Natural killer cell (primary cell): ENCODE measurements at regions of chr17 and their contacts with region 1.

Region 1: GRCh38 chr17:29617125-29617480 is 5.6 kb downstream of the CORO6 start:
- DNase-seq: peak; percentile 88 to 95
- ATAC-seq: peak; percentile 70 to 77 (median 71)
- H3K4me3 ChIP-seq: peak overlapping the region; percentile 60
- H3K4me3 Mint-ChIP-seq: peak overlapping the region; percentile 90
- H3K27ac ChIP-seq: no peak overlapping the region
- H3K27ac Mint-ChIP-seq: peak overlapping the region; percentile 48 to 86
- H3K4me1 ChIP-seq: peaks cover 62% of the 10 kb centered on the region
- H3K4me1 Mint-ChIP-seq: peaks cover 16 to 51% of the 10 kb centered on the region in 2 donors
- H3K27me3 ChIP-seq: no peaks in the 10 kb centered on the region
- H3K27me3 Mint-ChIP-seq: no peaks in the 10 kb centered on the region
- CTCF ChIP-seq: peak; percentile 64

Region 2: DNA sequence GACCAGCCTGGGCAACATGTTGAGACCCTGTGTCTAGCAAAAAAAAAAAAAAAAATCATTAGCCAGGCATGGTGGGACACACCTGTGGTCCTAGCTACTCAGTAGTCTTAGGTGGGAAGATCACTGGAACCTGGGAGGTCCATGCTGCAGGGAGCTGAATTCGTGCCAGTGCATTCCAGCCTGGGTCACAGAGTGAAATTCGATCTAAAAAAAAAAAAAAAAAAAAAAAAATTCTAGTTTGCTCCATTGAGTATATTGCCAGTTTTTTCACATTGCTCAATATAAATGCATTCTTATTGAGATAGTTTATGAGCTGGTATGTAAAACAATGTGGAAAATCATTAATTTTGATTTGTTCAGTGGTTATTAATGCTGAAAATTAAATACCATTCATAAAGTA is 102.3 kb before region 1 on chr17:
- intact Hi-C with region 1: no loop called
- DNase-seq: no peak
- ATAC-seq: no peak
- H3K4me3 ChIP-seq: no peak overlapping the region
- H3K4me3 Mint-ChIP-seq: no peak overlapping the region
- H3K27ac ChIP-seq: no peak overlapping the region
- H3K27ac Mint-ChIP-seq: no peak overlapping the region
- H3K4me1 ChIP-seq: no peaks in the 10 kb centered on the region
- H3K4me1 Mint-ChIP-seq: no peaks in the 10 kb centered on the region
- H3K27me3 ChIP-seq: no peaks in the 10 kb centered on the region
- H3K27me3 Mint-ChIP-seq: no peaks in the 10 kb centered on the region
- CTCF ChIP-seq: no peak

Region 3: DNA sequence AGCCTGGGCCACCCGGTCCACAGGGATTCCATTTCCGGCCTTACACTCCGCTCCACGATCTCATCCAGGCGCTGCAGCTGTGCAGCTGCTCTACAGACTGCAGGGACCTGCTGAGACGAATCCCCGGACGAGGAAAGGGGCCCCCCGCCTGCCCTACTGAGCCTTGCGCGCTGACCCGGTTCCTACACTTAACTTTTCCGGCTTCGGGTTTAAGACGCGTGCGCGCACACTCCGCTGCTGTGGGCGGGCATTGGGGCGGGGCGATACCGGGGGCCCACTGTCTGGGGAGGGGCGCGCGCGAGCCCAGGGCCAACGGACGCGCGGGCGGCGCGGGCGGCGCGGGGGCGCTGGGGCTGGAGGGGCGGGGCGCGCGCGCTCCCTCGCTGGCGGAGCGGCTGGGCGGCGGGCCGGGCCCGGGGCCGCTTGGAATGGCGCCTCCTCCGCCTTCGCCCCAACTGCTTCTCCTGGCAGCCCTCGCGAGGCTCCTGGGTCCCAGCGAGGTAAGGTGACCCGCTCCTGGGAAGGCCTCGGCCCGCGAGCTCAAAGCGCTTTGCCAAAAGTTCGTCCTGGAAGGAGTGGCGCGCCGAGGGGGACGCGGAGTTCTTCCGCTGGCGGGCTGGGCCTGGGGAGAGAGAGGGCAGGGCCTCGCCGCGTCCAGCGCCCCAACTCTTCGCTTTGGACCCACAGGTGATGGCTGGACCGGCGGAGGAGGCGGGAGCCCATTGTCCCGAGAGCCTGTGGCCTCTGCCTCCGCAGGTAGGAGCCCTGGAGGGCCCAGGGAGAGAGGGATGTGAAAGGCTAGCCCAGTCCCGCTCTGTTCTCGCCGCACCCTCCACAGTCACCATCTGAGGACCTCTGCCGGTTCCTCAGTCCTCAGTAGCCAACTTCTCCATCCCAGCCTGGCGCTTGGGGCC is 48.5 kb before region 1 on chr17 and contains the start of gene TP53I13:
- intact Hi-C with region 1: loop called (anchors 10 kb)
- DNase-seq: peak; percentile 74 to 92
- ATAC-seq: peak; percentile 57 to 73 (median 57)
- H3K4me3 ChIP-seq: peak within 1 kb of the TSS; percentile 96
- H3K4me3 Mint-ChIP-seq: peak within 1 kb of the TSS; percentile 99
- H3K27ac ChIP-seq: peak within 1 kb of the TSS; percentile 83
- H3K27ac Mint-ChIP-seq: peak within 1 kb of the TSS; percentile 93 to 94
- H3K4me1 ChIP-seq: peaks cover 49% of the 10 kb centered on the region
- H3K4me1 Mint-ChIP-seq: peaks cover 38 to 47% of the 10 kb centered on the region in 2 donors
- H3K27me3 ChIP-seq: no peaks in the 10 kb centered on the region
- H3K27me3 Mint-ChIP-seq: no peaks in the 10 kb centered on the region
- CTCF ChIP-seq: no peak
- total RNA-seq, gene TP53I13: 122 to 148 (median 148) TPM

Region 4: DNA sequence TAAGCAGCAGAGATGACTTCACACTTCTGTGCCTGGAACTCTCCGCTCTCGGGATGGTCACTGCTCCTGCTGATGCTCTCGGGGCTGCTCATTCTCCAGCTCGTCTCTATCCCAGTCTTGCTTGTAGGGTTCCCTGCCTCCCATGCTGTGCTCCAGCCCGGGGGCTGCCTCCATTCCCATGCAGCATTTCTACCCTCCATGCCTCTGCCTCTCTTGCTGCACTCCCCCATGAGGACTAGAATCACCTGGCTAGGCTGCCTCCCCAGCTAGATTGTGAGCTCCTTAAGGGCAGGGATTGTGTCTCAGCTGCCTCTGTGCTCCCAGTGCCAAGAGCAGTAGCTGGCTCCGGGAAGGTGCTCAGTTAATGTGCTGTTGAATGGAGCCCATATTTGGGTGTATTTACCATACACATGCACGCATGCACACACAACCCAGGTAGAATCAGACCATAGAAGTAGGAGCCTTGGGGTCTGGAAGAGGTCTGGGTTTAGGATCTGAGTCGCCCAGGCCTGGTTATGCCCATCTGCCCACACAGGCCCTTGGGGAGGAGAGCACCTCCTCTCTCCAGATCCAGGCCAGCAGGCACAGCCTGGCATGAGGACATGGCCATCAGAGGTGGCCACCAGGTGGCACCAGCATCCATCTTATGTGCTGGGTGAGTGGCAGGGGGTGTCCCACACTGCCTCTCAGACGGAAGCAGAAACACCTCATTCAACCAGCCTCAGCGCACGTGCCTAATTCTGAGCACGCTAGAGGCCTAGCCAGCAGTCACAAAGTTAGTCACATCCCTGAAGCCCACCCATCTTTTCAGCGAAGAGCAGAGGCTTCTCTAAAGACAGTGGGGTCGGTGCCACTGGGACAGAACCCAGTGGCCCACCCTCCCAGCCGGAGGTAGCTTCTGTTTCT is 37.0 kb before region 1 on chr17:
- intact Hi-C with region 1: loop called (anchors 1 kb)
- DNase-seq: peak; percentile 85 to 96
- ATAC-seq: peak; percentile 97 to 99 (median 99)
- H3K4me3 ChIP-seq: no peak overlapping the region
- H3K4me3 Mint-ChIP-seq: no peak overlapping the region
- H3K27ac ChIP-seq: peak overlapping the region; percentile 21
- H3K27ac Mint-ChIP-seq: peak overlapping the region; percentile 37 to 52
- H3K4me1 ChIP-seq: peaks cover 17% of the 10 kb centered on the region
- H3K4me1 Mint-ChIP-seq: peaks cover 9 to 24% of the 10 kb centered on the region in 2 donors
- H3K27me3 ChIP-seq: no peaks in the 10 kb centered on the region
- H3K27me3 Mint-ChIP-seq: no peaks in the 10 kb centered on the region
- CTCF ChIP-seq: peak; percentile 85

Region 5: GRCh38 chr17:29589524-29590410 is 27.3 kb before region 1 on chr17 and contains the start of gene GIT1:
- intact Hi-C with region 1: loop called (anchors 1 kb)
- DNase-seq: peak; percentile 86 to 93
- ATAC-seq: peak; percentile 86 to 95 (median 87)
- H3K4me3 ChIP-seq: peak within 1 kb of the TSS; percentile 70
- H3K4me3 Mint-ChIP-seq: peak within 1 kb of the TSS; percentile 85
- H3K27ac ChIP-seq: peak within 1 kb of the TSS; percentile 66
- H3K27ac Mint-ChIP-seq: peak within 1 kb of the TSS; percentile 50 to 83
- H3K4me1 ChIP-seq: peaks cover 80% of the 10 kb centered on the region
- H3K4me1 Mint-ChIP-seq: peaks cover 20 to 67% of the 10 kb centered on the region in 2 donors
- H3K27me3 ChIP-seq: peaks cover 3% of the 10 kb centered on the region
- H3K27me3 Mint-ChIP-seq: no peaks in the 10 kb centered on the region
- CTCF ChIP-seq: no peak
- total RNA-seq, gene GIT1: 39.4 to 61.4 (median 54.6) TPM

Region 6: GRCh38 chr17:29760761-29761696 is 143.9 kb after region 1 on chr17:
- intact Hi-C with region 1: loop called (anchors 5 kb)
- DNase-seq: peak; percentile 92 to 94
- ATAC-seq: peak; percentile 85 to 97 (median 90)
- H3K4me3 ChIP-seq: peak overlapping the region; percentile 85
- H3K4me3 Mint-ChIP-seq: peak overlapping the region; percentile 95
- H3K27ac ChIP-seq: peak overlapping the region; percentile 81
- H3K27ac Mint-ChIP-seq: peak overlapping the region; percentile 92 to 93
- H3K4me1 ChIP-seq: peaks cover 29% of the 10 kb centered on the region
- H3K4me1 Mint-ChIP-seq: peaks cover 35 to 39% of the 10 kb centered on the region in 2 donors
- H3K27me3 ChIP-seq: no peaks in the 10 kb centered on the region
- H3K27me3 Mint-ChIP-seq: no peaks in the 10 kb centered on the region
- CTCF ChIP-seq: no peak